ENCODE measurements at regions of chr7 and their contacts with region 1.

Region 1: GRCh38 chr7:103573479-103574058 is 127.6 kb upstream of the SLC26A5 start:
- DNase-seq: peak; percentile 28
- H3K27ac ChIP-seq: no peak overlapping the region
- CTCF ChIP-seq: peak; percentile 74

Region 2: DNA sequence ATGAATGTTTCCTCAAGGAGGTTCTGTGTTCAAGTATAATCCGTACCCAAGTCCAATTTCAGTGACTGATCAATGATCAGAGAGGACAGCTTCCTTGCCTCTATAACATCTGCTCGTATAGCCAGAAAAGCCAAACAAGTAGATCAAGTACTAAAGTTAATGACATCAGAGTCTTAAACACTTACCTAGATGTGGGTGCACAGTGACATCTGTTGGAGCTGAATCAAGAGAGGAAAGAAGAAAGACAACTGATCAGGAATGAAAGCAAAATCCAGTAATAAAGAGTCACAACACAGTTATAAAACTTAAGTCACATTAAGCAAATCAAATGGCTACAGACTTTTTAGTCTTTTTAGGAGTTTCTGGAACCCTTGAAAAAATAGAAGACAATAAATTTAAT is 179.4 kb after region 1 on chr7:
- CTCF ChIA-PET with region 1: interaction called, 14 read pairs
- POLR2A ChIA-PET with region 1: no interaction called
- DNase-seq: peak; percentile 15
- H3K27ac ChIP-seq: no peak overlapping the region
- CTCF ChIP-seq: no peak

Measured in RWPE1 (cell line).